Endothelial cell of umbilical vein (primary cell): ENCODE measurements at regions of chr7 and their contacts with region 1.

Region 1: DNA sequence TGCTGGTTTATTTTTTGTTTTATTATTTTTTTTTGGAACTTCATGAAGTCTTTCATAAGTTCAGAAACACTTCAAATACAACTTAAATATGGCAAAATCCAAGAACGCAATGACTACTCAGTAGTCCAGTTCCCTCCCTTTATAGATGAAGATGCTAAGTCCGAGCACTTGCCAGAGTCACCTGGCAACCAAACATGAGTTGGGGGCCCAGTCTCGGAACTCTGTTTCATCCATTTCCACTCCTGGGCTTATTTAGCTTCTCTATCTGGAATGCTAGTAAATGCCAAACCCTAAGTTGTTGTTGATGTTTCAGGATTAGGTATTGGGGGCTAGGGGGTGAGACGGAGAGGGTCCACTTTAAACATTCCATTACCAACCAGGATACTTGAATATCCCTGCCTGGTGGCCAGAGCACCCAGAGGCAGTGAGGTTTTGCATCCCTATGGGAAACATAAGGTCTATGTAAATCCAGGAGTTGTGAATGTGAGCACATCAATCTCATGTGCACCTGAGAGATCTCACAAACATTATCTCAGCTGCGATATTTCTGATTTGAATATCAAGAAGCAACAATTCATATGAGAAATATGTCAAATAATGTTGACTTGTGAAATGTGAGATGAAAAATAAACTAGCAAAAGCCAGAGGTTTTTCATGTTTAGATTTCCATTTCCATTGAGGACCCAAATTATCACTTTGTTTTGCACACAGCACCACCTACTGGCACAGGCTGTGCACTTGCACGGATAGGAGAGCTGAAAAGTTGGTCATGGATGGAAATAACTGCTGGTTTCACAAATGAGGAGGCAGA is 129.3 kb downstream of the PKD1L1 start:
- DNase-seq: peak; percentile 71
- H3K4me3 ChIP-seq: no peak overlapping the region
- H3K27ac ChIP-seq: no peak overlapping the region
- H3K4me1 ChIP-seq: no peaks in the 10 kb centered on the region
- H3K27me3 ChIP-seq: no peaks in the 10 kb centered on the region
- CTCF ChIP-seq: peak; percentile 79 to 93
- POLR2A ChIP-seq: no peak

Region 2: DNA sequence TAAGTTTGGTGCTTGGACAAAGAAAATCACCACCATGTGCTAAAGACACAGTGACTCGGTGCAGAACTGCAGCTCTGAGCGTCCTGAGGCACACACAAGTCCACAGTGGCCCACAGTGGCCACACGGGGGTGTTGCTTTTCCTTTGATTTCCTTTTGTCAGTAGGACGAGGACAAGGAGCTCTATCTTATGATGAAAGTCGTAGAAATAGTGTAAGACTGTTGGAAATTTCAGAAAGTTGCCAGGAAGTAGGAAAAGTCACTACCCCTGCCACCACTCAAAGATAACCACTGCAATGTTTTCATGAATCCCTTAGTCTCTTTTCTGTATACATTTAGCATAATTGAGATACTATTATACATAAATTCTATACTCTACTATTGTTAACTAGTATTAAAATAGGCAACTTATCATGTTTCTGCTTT is 383.1 kb before region 1 on chr7:
- CTCF ChIA-PET with region 1: interaction called, 101 read pairs
- POLR2A ChIA-PET with region 1: no interaction called
- dilution Hi-C with region 1: no loop called
- intact Hi-C with region 1: loop called (anchors 1 kb)
- DNase-seq: peak; percentile 68
- H3K4me3 ChIP-seq: no peak overlapping the region
- H3K27ac ChIP-seq: no peak overlapping the region
- H3K4me1 ChIP-seq: no peaks in the 10 kb centered on the region
- H3K27me3 ChIP-seq: no peaks in the 10 kb centered on the region
- CTCF ChIP-seq: peak; percentile 78 to 82
- POLR2A ChIP-seq: no peak

Region 3: DNA sequence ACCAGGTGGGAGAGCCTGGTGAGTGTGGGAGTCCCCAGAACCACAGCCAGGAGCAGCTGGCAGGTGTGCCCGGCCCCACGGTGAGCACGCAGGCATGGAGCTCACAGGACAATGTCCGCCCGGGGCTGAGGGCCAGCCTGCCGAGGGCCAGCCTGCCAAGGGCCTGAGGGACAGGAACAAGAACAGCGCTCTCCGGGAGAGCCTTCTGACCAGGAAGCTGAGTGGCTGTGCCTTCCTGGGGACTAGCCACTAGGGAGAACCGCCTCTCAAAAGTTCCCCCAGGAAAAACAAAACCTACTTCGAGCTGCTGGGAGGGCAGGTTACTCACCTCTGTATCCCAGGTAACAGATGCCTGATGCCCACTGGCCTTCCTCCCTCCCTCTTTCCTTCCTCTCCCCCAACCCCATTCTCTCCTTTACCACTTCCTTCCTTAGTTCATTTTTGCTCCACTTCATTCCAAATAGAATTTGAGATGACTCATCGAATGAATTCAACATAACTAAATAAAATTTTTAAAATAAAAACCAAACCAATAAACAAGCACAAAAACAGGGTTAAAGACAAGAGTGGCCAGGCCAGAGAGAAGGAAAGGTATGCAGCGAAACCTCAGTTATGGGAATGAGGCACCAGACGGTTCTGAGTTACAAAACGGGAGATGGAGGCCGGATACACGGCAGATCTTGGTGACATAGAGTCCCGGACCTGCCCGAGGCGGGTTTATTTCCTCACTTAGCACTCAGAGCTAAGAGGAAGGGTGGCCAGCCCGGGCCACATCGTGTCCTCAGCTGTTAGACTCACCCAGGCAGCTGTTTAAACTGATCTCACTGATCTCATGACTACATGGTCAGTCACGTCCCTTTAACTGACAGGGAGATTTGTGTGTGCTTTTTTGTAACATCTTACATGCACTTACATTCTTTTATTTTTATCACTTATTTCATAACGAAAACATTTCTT is 365.6 kb before region 1 on chr7:
- CTCF ChIA-PET with region 1: interaction called, 14 read pairs
- POLR2A ChIA-PET with region 1: no interaction called
- dilution Hi-C with region 1: no loop called
- intact Hi-C with region 1: no loop called
- DNase-seq: peak; percentile 74
- H3K4me3 ChIP-seq: peak overlapping the region in 2 of 3 experiments; percentile 38 to 72
- H3K27ac ChIP-seq: peak overlapping the region; percentile 99
- H3K4me1 ChIP-seq: peaks cover 46% of the 10 kb centered on the region
- H3K27me3 ChIP-seq: no peaks in the 10 kb centered on the region
- CTCF ChIP-seq: no peak
- POLR2A ChIP-seq: no peak

Region 4: GRCh38 chr7:47581806-47582763 is 236.9 kb before region 1 on chr7 and contains the start of gene TNS3:
- CTCF ChIA-PET with region 1: interaction called, 4 read pairs
- POLR2A ChIA-PET with region 1: no interaction called
- dilution Hi-C with region 1: no loop called
- intact Hi-C with region 1: loop called (anchors 2 kb)
- DNase-seq: no peak
- H3K4me3 ChIP-seq: peak within 1 kb of the TSS; percentile 56 to 74 (median 69)
- H3K27ac ChIP-seq: no peak within 1 kb of the TSS
- H3K4me1 ChIP-seq: peaks cover 18% of the 10 kb centered on the region
- H3K27me3 ChIP-seq: peaks cover 6 to 8% of the 10 kb centered on the region in 2 experiments
- CTCF ChIP-seq: peak; percentile 7 to 17
- POLR2A ChIP-seq: no peak
- total RNA-seq, gene TNS3: 45.1 and 59.8 TPM in 2 replicates

Region 5: GRCh38 chr7:47757921-47758411 is 61.0 kb before region 1 on chr7:
- CTCF ChIA-PET with region 1: interaction called, 28 read pairs
- POLR2A ChIA-PET with region 1: no interaction called
- dilution Hi-C with region 1: no loop called
- intact Hi-C with region 1: loop called (anchors 1 kb)
- DNase-seq: no peak
- H3K4me3 ChIP-seq: no peak overlapping the region
- H3K27ac ChIP-seq: no peak overlapping the region
- H3K4me1 ChIP-seq: no peaks in the 10 kb centered on the region
- H3K27me3 ChIP-seq: no peaks in the 10 kb centered on the region
- CTCF ChIP-seq: no peak
- POLR2A ChIP-seq: no peak

Region 6: GRCh38 chr7:47806701-47807103 is 12.3 kb before region 1 on chr7:
- CTCF ChIA-PET with region 1: interaction called, 16 read pairs
- POLR2A ChIA-PET with region 1: no interaction called
- dilution Hi-C with region 1: no loop called
- intact Hi-C with region 1: no loop called
- DNase-seq: peak; percentile 59
- H3K4me3 ChIP-seq: no peak overlapping the region
- H3K27ac ChIP-seq: peak overlapping the region; percentile 36
- H3K4me1 ChIP-seq: peaks cover 31% of the 10 kb centered on the region
- H3K27me3 ChIP-seq: no peaks in the 10 kb centered on the region
- CTCF ChIP-seq: no peak
- POLR2A ChIP-seq: no peak